ENCODE measurements at regions of chr11 and their contacts with region 1.

Region 1: DNA sequence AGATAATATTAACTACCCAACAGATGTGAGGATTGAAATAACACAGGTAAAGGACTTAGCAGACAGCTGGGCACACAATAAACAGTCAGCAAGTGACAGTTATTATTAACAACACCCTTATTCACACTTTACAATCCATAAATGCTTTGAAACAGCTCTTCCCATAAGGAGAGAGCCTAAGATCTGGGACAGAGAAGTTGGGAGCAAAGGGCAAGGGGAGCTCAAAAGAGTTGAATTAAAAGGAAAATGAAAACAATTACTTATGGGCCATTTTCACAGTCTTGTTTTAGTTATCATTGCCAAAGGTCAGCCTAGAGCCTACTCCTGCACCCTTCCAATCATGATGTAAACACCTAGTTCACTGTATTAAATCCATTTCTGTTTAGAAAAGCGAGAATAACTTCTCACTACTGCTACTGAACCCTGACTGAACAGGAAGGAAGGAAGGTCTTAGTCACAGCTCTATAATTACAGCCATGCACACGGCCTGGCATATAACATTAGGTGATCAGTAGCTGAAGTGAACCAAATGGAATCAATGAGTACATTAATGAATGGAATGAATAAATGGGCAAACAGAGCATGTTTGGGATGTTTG is 111.3 kb downstream of the PLEKHA7 start:
- DNase-seq: peak; percentile 30
- H3K4me3 Mint-ChIP-seq: peak overlapping the region; percentile 3
- H3K27ac Mint-ChIP-seq: peak overlapping the region; percentile 92
- H3K4me1 Mint-ChIP-seq: peaks cover 43% of the 10 kb centered on the region
- H3K27me3 Mint-ChIP-seq: no peaks in the 10 kb centered on the region

Region 2: DNA sequence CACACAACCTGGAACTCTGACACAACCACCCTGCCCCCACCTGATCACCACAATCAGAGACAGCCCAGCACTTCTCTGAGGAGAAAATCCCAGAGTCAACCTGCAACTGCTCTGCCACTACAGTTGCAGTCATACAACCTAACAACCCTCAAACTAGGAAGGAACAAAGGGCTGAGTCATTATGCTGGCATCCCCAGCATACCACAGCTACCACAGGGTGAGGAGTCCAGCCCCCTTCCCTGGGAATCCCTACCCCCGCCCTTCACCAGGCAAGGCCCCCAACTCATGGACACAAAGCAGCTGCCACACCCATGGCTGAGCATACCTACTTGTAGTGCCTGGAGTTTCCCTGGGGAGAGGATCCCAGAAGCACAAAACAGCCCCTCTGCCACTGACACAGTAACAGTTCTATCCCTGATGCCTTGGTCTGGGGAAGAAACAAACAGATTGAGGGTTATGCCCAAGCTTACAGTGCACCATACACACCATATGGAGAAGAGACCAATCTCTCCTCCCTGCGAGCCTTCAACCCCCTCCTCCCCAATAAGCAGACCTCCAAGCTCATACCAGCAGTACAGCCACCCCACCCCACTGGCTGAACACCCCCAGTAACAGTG is 233.0 kb before region 1 on chr11:
- CTCF ChIA-PET with region 1: no interaction called
- intact Hi-C with region 1: no loop called
- DNase-seq: no peak
- H3K4me3 Mint-ChIP-seq: no peak overlapping the region
- H3K27ac Mint-ChIP-seq: no peak overlapping the region
- H3K4me1 Mint-ChIP-seq: no peaks in the 10 kb centered on the region
- H3K27me3 Mint-ChIP-seq: peaks cover 2% of the 10 kb centered on the region

Region 3: DNA sequence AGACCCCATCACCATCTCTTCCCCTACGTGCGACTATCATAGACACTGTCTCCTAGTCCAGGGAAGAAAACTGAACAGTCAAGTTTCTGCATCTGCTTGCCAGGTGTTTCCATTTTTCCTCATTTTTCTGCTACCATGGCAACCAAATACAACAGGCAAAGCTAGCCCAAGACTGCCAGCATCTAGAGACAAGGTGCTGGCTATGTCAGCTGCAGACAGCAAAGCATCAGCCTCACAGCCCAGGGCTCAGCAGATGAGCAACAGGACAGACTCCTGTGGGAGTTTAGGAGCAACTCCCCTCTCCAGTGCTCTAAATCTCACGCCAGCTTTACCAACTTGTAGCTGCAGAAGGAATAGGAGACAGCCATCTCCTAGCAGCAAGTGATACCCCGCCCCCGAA is 40.1 kb before region 1 on chr11:
- CTCF ChIA-PET with region 1: interaction called, 3 read pairs
- intact Hi-C with region 1: loop called (anchors 1 kb)
- DNase-seq: no peak
- H3K4me3 Mint-ChIP-seq: no peak overlapping the region
- H3K27ac Mint-ChIP-seq: no peak overlapping the region
- H3K4me1 Mint-ChIP-seq: peaks cover 16% of the 10 kb centered on the region
- H3K27me3 Mint-ChIP-seq: peaks cover 2% of the 10 kb centered on the region

Region 4: GRCh38 chr11:16993495-16993894 is 90.6 kb after region 1 on chr11:
- CTCF ChIA-PET with region 1: no interaction called
- intact Hi-C with region 1: no loop called
- DNase-seq: no peak
- H3K4me3 Mint-ChIP-seq: no peak overlapping the region
- H3K27ac Mint-ChIP-seq: no peak overlapping the region
- H3K4me1 Mint-ChIP-seq: peaks cover 5% of the 10 kb centered on the region
- H3K27me3 Mint-ChIP-seq: no peaks in the 10 kb centered on the region

Region 5: DNA sequence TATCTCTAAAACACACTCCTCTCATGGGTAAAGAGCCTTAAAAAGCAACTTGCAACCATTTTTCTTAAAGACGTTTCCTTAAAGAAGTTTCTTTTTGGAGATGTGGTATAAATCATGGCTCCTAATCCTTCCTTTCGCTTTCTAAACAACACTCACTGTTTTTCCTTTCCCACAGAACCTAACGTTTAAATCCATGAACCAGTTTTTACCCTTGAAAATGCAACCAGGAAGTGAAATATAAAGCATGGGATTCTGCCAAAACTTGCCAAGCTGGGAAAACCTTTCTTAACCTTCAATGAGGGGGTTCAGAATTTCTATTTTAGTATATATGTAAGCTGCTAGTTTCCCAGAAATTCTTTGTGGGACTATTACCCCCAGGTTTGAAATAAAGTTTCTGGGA is 102.8 kb after region 1 on chr11:
- CTCF ChIA-PET with region 1: no interaction called
- intact Hi-C with region 1: no loop called
- DNase-seq: no peak
- H3K4me3 Mint-ChIP-seq: no peak overlapping the region
- H3K27ac Mint-ChIP-seq: no peak overlapping the region
- H3K4me1 Mint-ChIP-seq: no peaks in the 10 kb centered on the region
- H3K27me3 Mint-ChIP-seq: no peaks in the 10 kb centered on the region